ENCODE measurements at regions of chr1 and their contacts with region 1.

Region 1: GRCh38 chr1:235783148-235783776 is 83.4 kb downstream of the LYST start:
- DNase-seq: no peak
- H3K4me3 ChIP-seq: no peak overlapping the region
- H3K27ac ChIP-seq: no peak overlapping the region
- H3K4me1 ChIP-seq: no peaks in the 10 kb centered on the region
- H3K27me3 ChIP-seq: no peaks in the 10 kb centered on the region
- CTCF ChIP-seq: peak in 1 of 4 experiments; percentile 33
- EP300 ChIP-seq: no peak
- POLR2A ChIP-seq: no peak

Region 2: GRCh38 chr1:235767795-235768194 is 15.5 kb before region 1 on chr1:
- intact Hi-C with region 1: no loop called
- DNase-seq: no peak
- H3K4me3 ChIP-seq: no peak overlapping the region
- H3K27ac ChIP-seq: no peak overlapping the region
- H3K4me1 ChIP-seq: no peaks in the 10 kb centered on the region
- H3K27me3 ChIP-seq: no peaks in the 10 kb centered on the region
- CTCF ChIP-seq: no peak
- EP300 ChIP-seq: no peak
- POLR2A ChIP-seq: no peak

Region 3: DNA sequence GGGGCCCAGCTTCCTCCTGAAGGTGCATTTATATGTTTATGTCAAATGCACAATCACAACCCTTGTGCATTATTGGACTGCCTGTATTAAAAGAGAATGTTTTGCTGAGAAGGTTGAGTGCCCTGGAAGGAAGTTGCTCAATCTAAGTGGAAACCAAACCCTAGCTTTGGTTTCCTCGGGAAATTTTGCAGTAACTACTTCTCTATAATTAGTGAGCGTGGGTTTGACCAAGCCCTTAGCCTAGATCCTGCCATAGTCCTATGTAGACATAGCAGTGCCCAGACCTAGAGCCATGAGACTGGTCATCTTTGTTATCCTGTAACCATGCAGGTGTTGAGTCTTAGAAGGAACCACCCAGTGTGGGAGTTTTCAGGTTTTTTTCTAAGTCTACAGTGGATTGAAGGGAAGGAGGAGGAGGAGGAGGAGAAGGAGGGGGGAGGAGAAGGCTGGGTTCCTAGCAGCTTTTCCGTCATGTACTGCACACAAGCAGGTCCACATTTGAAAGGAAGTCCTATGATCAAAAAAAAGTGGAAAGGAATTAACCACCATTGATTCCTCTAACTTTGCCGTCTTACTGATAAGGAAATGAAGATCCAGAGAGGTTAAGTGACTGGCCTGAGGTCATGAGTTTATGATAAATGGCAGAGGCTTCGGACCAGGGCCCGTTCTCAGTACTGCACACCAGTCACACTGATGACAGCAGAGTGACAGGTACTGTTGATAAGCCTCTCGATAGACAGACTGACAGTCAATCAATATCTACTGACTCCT is 155.6 kb after region 1 on chr1:
- intact Hi-C with region 1: no loop called
- DNase-seq: no peak
- H3K4me3 ChIP-seq: no peak overlapping the region
- H3K27ac ChIP-seq: peak overlapping the region in 2 of 4 donors; percentile 30 to 42
- H3K4me1 ChIP-seq: peaks cover 0 to 6% (median 4%) of the 10 kb centered on the region in 4 donors
- H3K27me3 ChIP-seq: no peaks in the 10 kb centered on the region
- CTCF ChIP-seq: no peak
- EP300 ChIP-seq: no peak
- POLR2A ChIP-seq: no peak

Region 4: DNA sequence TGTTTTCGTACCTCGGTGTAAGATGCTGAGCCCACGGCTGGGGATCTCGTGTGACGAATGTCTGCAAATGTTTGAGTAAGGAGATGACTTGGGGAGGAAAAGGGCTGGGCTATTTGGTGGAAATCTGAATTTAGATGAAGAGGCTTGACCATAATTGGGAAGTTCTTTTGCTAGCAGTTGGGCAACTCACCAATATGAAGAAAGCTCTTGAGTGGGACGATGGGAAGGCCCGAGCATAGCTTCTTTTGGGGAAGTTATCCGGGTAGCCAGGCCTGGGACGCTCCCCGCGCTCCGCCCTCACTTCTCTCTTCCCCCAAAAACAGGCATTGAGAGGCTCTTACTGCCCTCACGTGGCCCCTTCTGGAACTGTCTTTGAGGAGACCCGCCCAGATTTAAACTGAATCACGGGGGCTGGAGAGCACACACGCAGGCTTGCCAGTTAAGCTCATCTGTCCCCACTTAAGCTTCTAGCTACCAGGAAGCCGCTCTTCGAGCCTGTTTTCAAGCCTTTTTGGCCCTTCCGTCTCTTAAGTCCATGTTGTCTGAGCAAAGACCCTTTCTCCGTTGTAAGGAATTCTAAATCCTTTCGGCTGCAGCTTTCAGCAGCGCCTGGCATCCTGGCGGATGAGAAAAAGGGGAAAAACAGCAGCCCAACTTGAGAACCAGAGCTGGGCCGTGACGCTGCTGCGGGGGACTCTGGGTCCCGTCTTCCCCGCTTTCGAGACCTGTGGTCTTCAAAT is 188.5 kb after region 1 on chr1:
- intact Hi-C with region 1: loop called (anchors 10 kb)
- DNase-seq: peak; percentile 98
- H3K4me3 ChIP-seq: peak overlapping the region; percentile 10 to 52 (median 44)
- H3K27ac ChIP-seq: peak overlapping the region; percentile 88 to 98 (median 91)
- H3K4me1 ChIP-seq: peaks cover 0 to 22% (median 15%) of the 10 kb centered on the region in 4 donors
- H3K27me3 ChIP-seq: no peaks in the 10 kb centered on the region
- CTCF ChIP-seq: peak; percentile 76 to 82 (median 78)
- EP300 ChIP-seq: peak in 1 of 4 donors; percentile 3
- POLR2A ChIP-seq: peak; percentile 37 to 50